B cell (primary cell): ENCODE measurements at regions of chr14 and their contacts with region 1.

Region 1: GRCh38 chr14:34875031-34875922 is at the start of gene BAZ1A:
- DNase-seq: peak; percentile 72
- ATAC-seq: peak; percentile 9
- H3K4me3 ChIP-seq: peak within 1 kb of the TSS; percentile 89 to 97 (median 92)
- H3K4me3 Mint-ChIP-seq: peak within 1 kb of the TSS; percentile 100
- H3K27ac ChIP-seq: peak within 1 kb of the TSS; percentile 100
- H3K27ac Mint-ChIP-seq: peak within 1 kb of the TSS; percentile 100
- H3K4me1 ChIP-seq: peaks cover 18% of the 10 kb centered on the region in 2 donors
- H3K4me1 Mint-ChIP-seq: peaks cover 37% of the 10 kb centered on the region
- H3K27me3 ChIP-seq: no peaks in the 10 kb centered on the region
- H3K27me3 Mint-ChIP-seq: no peaks in the 10 kb centered on the region
- CTCF ChIP-seq: no peak
- total RNA-seq, gene BAZ1A: 36.8 and 41.7 TPM in 2 replicates

Region 2: GRCh38 chr14:34461334-34462131 is 413.7 kb before region 1 on chr14:
- CTCF ChIA-PET with region 1: no interaction called
- POLR2A ChIA-PET with region 1: no interaction called
- intact Hi-C with region 1: loop called (anchors 5 kb)
- DNase-seq: peak; percentile 50
- ATAC-seq: no peak
- H3K4me3 ChIP-seq: peak overlapping the region; percentile 50 to 95 (median 64)
- H3K4me3 Mint-ChIP-seq: peak overlapping the region; percentile 86
- H3K27ac ChIP-seq: peak overlapping the region; percentile 16 to 60
- H3K27ac Mint-ChIP-seq: peak overlapping the region; percentile 91
- H3K4me1 ChIP-seq: peaks cover 8 to 15% of the 10 kb centered on the region in 2 donors
- H3K4me1 Mint-ChIP-seq: peaks cover 18% of the 10 kb centered on the region
- H3K27me3 ChIP-seq: no peaks in the 10 kb centered on the region
- H3K27me3 Mint-ChIP-seq: no peaks in the 10 kb centered on the region
- CTCF ChIP-seq: no peak

Region 3: GRCh38 chr14:34714320-34715126 is 160.8 kb before region 1 on chr14 and contains the start of gene CFL2:
- CTCF ChIA-PET with region 1: no interaction called
- POLR2A ChIA-PET with region 1: interaction called, 11 read pairs
- intact Hi-C with region 1: loop called (anchors 1 kb)
- DNase-seq: peak; percentile 86
- ATAC-seq: peak; percentile 91
- H3K4me3 ChIP-seq: peak within 1 kb of the TSS; percentile 61 to 91 (median 81)
- H3K4me3 Mint-ChIP-seq: peak within 1 kb of the TSS; percentile 94
- H3K27ac ChIP-seq: peak within 1 kb of the TSS; percentile 75 to 87
- H3K27ac Mint-ChIP-seq: peak within 1 kb of the TSS; percentile 94
- H3K4me1 ChIP-seq: peaks cover 11 to 15% of the 10 kb centered on the region in 2 donors
- H3K4me1 Mint-ChIP-seq: peaks cover 29% of the 10 kb centered on the region
- H3K27me3 ChIP-seq: no peaks in the 10 kb centered on the region
- H3K27me3 Mint-ChIP-seq: no peaks in the 10 kb centered on the region
- CTCF ChIP-seq: no peak
- total RNA-seq, gene CFL2: 21.9 and 25.2 TPM in 2 replicates

Region 4: GRCh38 chr14:34833549-34834523 is 41.4 kb before region 1 on chr14:
- CTCF ChIA-PET with region 1: no interaction called
- POLR2A ChIA-PET with region 1: no interaction called
- intact Hi-C with region 1: loop called (anchors 5 kb)
- DNase-seq: no peak
- ATAC-seq: no peak
- H3K4me3 ChIP-seq: no peak overlapping the region
- H3K4me3 Mint-ChIP-seq: no peak overlapping the region
- H3K27ac ChIP-seq: peak overlapping the region; percentile 7 to 66
- H3K27ac Mint-ChIP-seq: peak overlapping the region; percentile 8
- H3K4me1 ChIP-seq: peaks cover 9 to 19% of the 10 kb centered on the region in 2 donors
- H3K4me1 Mint-ChIP-seq: peaks cover 38% of the 10 kb centered on the region
- H3K27me3 ChIP-seq: no peaks in the 10 kb centered on the region
- H3K27me3 Mint-ChIP-seq: no peaks in the 10 kb centered on the region
- CTCF ChIP-seq: no peak

Region 5: GRCh38 chr14:34982417-34983147 is 107.3 kb after region 1 on chr14 and contains the start of gene SRP54:
- CTCF ChIA-PET with region 1: interaction called, 8 read pairs
- POLR2A ChIA-PET with region 1: interaction called, 6 read pairs
- intact Hi-C with region 1: loop called (anchors 1 kb)
- DNase-seq: peak; percentile 99
- ATAC-seq: peak; percentile 91
- H3K4me3 ChIP-seq: peak within 1 kb of the TSS; percentile 71 to 99 (median 95)
- H3K4me3 Mint-ChIP-seq: no peak within 1 kb of the TSS
- H3K27ac ChIP-seq: peak within 1 kb of the TSS; percentile 95 to 97
- H3K27ac Mint-ChIP-seq: no peak within 1 kb of the TSS
- H3K4me1 ChIP-seq: peaks cover 25 to 26% of the 10 kb centered on the region in 2 donors
- H3K4me1 Mint-ChIP-seq: peaks cover 23% of the 10 kb centered on the region
- H3K27me3 ChIP-seq: no peaks in the 10 kb centered on the region
- H3K27me3 Mint-ChIP-seq: no peaks in the 10 kb centered on the region
- CTCF ChIP-seq: no peak
- total RNA-seq, gene SRP54: 54.9 and 59.5 TPM in 2 replicates

Region 6: GRCh38 chr14:35088514-35088913 is 213.2 kb after region 1 on chr14:
- CTCF ChIA-PET with region 1: no interaction called
- POLR2A ChIA-PET with region 1: no interaction called
- intact Hi-C with region 1: no loop called
- DNase-seq: no peak
- ATAC-seq: no peak
- H3K4me3 ChIP-seq: no peak overlapping the region
- H3K4me3 Mint-ChIP-seq: no peak overlapping the region
- H3K27ac ChIP-seq: no peak overlapping the region
- H3K27ac Mint-ChIP-seq: no peak overlapping the region
- H3K4me1 ChIP-seq: no peaks in the 10 kb centered on the region
- H3K4me1 Mint-ChIP-seq: no peaks in the 10 kb centered on the region
- H3K27me3 ChIP-seq: no peaks in the 10 kb centered on the region
- H3K27me3 Mint-ChIP-seq: no peaks in the 10 kb centered on the region
- CTCF ChIP-seq: no peak

Region 7: DNA sequence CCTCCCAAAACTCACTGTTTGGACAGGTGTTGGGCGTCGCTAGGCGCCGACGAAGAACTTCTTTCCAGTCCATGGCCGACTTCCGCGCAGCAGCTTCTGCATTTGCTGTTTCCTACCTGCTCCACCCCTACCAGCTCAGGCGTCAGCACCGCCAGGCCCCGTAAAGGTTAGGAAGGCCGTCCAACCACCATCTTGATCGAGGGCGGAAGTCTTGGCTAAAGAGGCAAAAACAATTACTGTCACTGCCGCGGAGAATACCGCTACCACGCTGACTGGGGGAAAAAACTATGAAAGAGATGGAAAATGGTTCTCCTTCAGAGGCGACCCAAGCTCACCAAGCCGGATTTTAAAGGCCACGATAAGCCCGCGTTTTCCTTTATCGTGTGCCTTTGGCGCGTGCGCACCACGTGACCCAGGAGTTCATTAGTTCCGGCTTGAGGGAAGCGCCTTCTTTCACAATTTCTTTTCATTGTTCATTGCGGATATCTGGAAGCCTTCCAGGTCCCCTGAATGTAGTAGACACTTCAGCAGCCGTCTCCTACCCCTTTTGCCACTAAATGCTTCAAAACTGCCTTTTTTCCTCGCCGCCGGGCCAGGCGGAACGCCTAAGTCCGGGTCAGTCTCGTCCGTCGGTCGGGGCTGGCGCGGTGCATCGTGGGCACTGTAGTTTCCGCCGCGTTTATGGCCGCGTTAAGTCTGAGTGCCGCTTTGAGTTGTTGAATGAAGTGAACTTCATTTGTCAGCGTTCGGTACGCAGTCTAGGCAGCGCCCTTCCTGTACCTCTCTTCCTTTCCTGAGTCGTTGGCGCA is 246.8 kb after region 1 on chr14 and contains the starts of genes PPP2R3C and PRORP:
- CTCF ChIA-PET with region 1: interaction called, 4 read pairs
- POLR2A ChIA-PET with region 1: no interaction called
- intact Hi-C with region 1: loop called (anchors 1 kb)
- DNase-seq: peak; percentile 97
- ATAC-seq: peak; percentile 89
- H3K4me3 ChIP-seq: peak within 1 kb of the TSS; percentile 70 to 97 (median 77)
- H3K4me3 Mint-ChIP-seq: peak within 1 kb of the TSS; percentile 100
- H3K27ac ChIP-seq: peak within 1 kb of the TSS; percentile 94 to 100
- H3K27ac Mint-ChIP-seq: peak within 1 kb of the TSS; percentile 99
- H3K4me1 ChIP-seq: peaks cover 19 to 24% of the 10 kb centered on the region in 2 donors
- H3K4me1 Mint-ChIP-seq: peaks cover 53% of the 10 kb centered on the region
- H3K27me3 ChIP-seq: no peaks in the 10 kb centered on the region
- H3K27me3 Mint-ChIP-seq: no peaks in the 10 kb centered on the region
- CTCF ChIP-seq: no peak
- total RNA-seq, gene PPP2R3C: 40.8 and 41.7 TPM in 2 replicates
- total RNA-seq, gene PRORP: 16.4 and 22.2 TPM in 2 replicates

Region 8: GRCh38 chr14:35826218-35826951 is 951.1 kb after region 1 on chr14 and contains the start of gene BRMS1L:
- CTCF ChIA-PET with region 1: interaction called, 3 read pairs
- POLR2A ChIA-PET with region 1: no interaction called
- intact Hi-C with region 1: loop called (anchors 10 kb)
- DNase-seq: peak; percentile 97
- ATAC-seq: peak; percentile 95
- H3K4me3 ChIP-seq: peak within 1 kb of the TSS; percentile 81 to 100 (median 90)
- H3K4me3 Mint-ChIP-seq: peak within 1 kb of the TSS; percentile 89
- H3K27ac ChIP-seq: peak within 1 kb of the TSS; percentile 75
- H3K27ac Mint-ChIP-seq: peak within 1 kb of the TSS; percentile 91
- H3K4me1 ChIP-seq: peaks cover 7 to 11% of the 10 kb centered on the region in 2 donors
- H3K4me1 Mint-ChIP-seq: peaks cover 25% of the 10 kb centered on the region
- H3K27me3 ChIP-seq: no peaks in the 10 kb centered on the region
- H3K27me3 Mint-ChIP-seq: no peaks in the 10 kb centered on the region
- CTCF ChIP-seq: no peak
- total RNA-seq, gene BRMS1L: 4.7 and 6.3 TPM in 2 replicates